Breast epithelium (tissue), 4 donors: ENCODE measurements at regions of chr2 and their contacts with region 1.

Region 1: DNA sequence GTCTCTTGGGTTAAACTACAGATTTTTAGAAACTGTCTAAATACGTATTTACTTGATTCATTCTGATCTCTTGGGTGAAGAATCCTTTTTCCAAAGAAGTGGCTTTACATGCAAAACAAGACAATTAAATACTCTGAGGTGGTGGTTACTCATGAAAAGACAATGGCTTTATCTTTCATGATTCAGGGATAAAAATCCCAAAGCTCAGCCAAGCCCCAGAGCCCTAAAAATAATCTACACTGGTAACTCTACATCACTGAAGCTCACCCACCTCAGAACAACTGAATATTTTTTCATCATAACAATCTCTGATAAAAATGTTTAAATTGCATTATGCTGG is 128.3 kb upstream of the SERTAD2 start:
- DNase-seq: no peak
- H3K4me3 ChIP-seq: no peak overlapping the region
- H3K27ac ChIP-seq: no peak overlapping the region
- H3K4me1 ChIP-seq: no peaks in the 10 kb centered on the region
- H3K27me3 ChIP-seq: no peaks in the 10 kb centered on the region
- CTCF ChIP-seq: no peak
- POLR2A ChIP-seq: no peak

Region 2: GRCh38 chr2:64626963-64627760 is 154.9 kb before region 1 on chr2:
- intact Hi-C with region 1: loop called (anchors 1 kb)
- DNase-seq: no peak
- H3K4me3 ChIP-seq: no peak overlapping the region
- H3K27ac ChIP-seq: no peak overlapping the region
- H3K4me1 ChIP-seq: no peaks in the 10 kb centered on the region
- H3K27me3 ChIP-seq: no peaks in the 10 kb centered on the region
- CTCF ChIP-seq: no peak
- POLR2A ChIP-seq: no peak